Motor neuron (in vitro differentiated cells): ENCODE measurements at regions of chr5 and their contacts with region 1.

Region 1: DNA sequence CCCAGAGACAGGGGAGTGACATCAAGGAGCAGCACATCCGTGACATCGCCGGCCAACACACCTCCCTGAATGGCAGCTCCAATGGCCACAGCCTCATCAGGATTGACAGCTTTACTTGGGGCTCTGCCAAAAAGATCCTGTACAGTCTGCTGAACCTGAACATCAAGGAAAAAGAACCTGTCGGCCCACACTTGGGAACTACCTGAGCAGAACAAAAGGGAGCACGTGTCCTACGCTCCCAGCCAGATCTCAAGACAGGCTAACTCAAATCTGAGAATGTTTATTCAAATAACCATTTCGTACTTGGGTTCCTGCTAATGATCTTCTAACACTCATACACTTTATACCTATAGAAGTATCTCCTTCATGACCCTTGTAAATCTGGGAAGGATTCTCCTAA is 15.3 kb downstream of the HSPA9 start:
- ATAC-seq: no peak
- H3K4me3 ChIP-seq: no peak overlapping the region
- H3K27ac ChIP-seq: no peak overlapping the region
- H3K4me1 ChIP-seq: no peaks in the 10 kb centered on the region

Region 2: GRCh38 chr5:138449501-138450239 is 110.3 kb before region 1 on chr5:
- in situ Hi-C with region 1: loop called in 1 of 9 experiments (anchors 10 kb)
- ATAC-seq: peak; percentile 77 to 97 (median 82)
- H3K4me3 ChIP-seq: no peak overlapping the region
- H3K27ac ChIP-seq: peak overlapping the region; percentile 18 to 59
- H3K4me1 ChIP-seq: peaks cover 21 to 25% of the 10 kb centered on the region in 2 donors

Region 3: GRCh38 chr5:139193928-139194327 is 634.0 kb after region 1 on chr5:
- in situ Hi-C with region 1: no loop called
- ATAC-seq: no peak
- H3K4me3 ChIP-seq: no peak overlapping the region
- H3K27ac ChIP-seq: no peak overlapping the region
- H3K4me1 ChIP-seq: peaks cover 6 to 9% of the 10 kb centered on the region in 2 donors